A673 (cell line): ENCODE measurements at regions of chr18 and their contacts with region 1.

Region 1: DNA sequence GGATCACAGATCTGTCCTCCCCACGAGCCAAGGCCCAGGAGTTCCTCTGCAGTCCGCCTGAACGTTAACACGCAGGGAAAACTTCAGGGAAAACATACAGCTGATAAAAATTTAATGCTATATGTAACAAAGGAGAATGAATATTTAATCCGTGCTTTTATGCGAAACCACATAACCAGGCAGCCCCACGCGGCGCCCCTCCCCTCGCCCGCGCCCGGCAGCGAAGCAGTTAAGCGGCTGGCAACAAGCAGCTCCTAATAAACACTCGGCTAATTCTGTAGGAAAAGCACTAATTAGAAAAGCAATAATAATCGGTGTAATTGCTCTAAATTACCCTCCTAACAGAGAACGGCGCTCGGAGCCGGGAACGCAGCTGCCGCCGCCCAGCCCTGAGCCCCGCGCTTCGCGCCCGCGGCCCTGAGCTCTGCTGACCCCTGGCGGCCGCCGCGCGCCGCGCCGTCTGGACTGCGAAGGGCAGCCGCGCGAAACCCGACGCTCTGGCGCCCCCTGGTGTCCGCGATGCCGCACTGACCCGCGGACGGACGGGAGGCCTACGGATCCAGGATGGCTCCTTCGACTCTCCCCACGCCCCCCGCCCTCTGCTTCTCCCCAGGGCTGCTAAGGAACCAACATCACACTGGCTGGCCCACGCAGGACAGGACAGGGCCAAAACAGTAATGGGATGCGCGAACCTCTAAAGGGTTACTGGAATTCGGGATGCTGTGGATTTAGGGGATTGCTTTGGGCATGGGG is 181.4 kb downstream of the SMAD2 start:
- DNase-seq: peak; percentile 73
- H3K4me3 ChIP-seq: peak overlapping the region; percentile 29
- H3K27ac ChIP-seq: no peak overlapping the region
- H3K4me1 ChIP-seq: no peaks in the 10 kb centered on the region
- H3K27me3 ChIP-seq: peaks cover 4% of the 10 kb centered on the region
- CTCF ChIP-seq: peak; percentile 93

Region 2: DNA sequence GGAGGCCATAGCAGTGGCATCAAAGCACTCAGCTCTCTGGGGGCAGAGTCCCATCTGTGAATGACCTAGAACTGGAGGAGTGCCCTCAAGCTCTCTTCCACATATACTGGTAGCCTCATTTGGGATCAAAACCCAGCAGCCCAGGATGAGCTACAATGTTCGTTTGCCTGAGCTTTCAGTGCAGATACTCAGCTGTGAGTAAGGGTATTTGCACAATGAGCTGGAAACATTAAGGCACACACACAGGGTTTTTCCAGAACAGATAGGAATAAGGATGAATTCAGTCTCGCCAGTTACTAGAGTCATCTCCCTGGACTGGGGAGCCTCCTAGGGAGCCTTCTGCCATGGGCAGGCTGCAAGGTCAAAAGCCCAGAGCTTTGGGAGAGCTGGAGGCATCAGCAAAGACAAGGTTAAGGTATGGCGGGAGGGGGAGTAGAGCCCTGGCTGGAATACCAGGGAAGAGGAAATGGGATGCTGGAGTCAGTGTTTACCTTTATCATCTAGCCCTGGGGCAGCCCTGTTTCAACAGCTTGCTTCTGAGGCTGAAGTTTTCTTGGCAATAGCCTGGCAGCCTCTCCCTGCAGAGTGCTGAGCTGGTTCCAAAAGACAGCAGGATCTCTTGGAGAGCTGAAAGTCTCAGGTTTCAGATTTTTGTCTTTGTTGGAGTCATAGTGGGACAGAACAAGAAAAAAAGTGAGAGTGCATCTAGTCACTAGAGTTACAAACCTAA is 1279.7 kb before region 1 on chr18:
- CTCF ChIA-PET with region 1: no interaction called
- POLR2A ChIA-PET with region 1: no interaction called
- intact Hi-C with region 1: no loop called
- DNase-seq: peak; percentile 56
- H3K4me3 ChIP-seq: no peak overlapping the region
- H3K27ac ChIP-seq: no peak overlapping the region
- H3K4me1 ChIP-seq: peaks cover 23% of the 10 kb centered on the region
- H3K27me3 ChIP-seq: no peaks in the 10 kb centered on the region
- CTCF ChIP-seq: no peak

Region 3: DNA sequence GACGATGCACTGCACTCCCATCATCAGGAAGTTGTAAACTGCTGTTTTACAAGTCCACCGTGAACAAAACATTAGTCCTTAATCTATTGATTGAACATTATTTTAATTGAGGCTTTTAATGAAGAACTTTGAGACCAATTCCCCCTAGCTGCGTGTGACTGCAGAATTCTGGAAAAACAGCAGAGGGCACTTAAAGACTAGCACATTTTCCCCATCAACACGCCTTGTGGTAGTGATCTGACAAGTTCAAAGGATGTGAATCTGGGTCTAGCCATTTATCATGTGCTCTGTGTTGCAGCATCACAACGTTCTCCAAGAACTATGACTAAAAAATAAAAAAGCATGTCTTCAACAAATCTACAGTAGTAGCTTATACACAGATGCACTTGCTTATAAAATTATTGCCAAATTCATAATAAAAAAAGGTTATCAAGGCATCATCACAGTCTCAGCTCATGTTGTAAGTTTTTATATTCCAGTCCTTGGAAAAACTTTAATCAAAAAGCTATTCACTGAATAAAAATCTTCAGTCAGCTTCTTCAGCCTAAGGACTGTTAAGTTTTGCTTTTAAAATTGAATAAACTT is 533.4 kb before region 1 on chr18:
- CTCF ChIA-PET with region 1: interaction called, 11 read pairs
- POLR2A ChIA-PET with region 1: no interaction called
- intact Hi-C with region 1: loop called (anchors 1 kb)
- DNase-seq: peak; percentile 53
- H3K4me3 ChIP-seq: no peak overlapping the region
- H3K27ac ChIP-seq: no peak overlapping the region
- H3K4me1 ChIP-seq: no peaks in the 10 kb centered on the region
- H3K27me3 ChIP-seq: peaks cover 97% of the 10 kb centered on the region
- CTCF ChIP-seq: peak; percentile 76

Region 4: GRCh38 chr18:47531717-47532116 is 217.3 kb before region 1 on chr18:
- CTCF ChIA-PET with region 1: no interaction called
- POLR2A ChIA-PET with region 1: no interaction called
- intact Hi-C with region 1: no loop called
- DNase-seq: no peak
- H3K4me3 ChIP-seq: no peak overlapping the region
- H3K27ac ChIP-seq: no peak overlapping the region
- H3K4me1 ChIP-seq: no peaks in the 10 kb centered on the region
- H3K27me3 ChIP-seq: peaks cover 79% of the 10 kb centered on the region
- CTCF ChIP-seq: peak; percentile 26; the same call in 1 of the 2 replicates

Region 5: DNA sequence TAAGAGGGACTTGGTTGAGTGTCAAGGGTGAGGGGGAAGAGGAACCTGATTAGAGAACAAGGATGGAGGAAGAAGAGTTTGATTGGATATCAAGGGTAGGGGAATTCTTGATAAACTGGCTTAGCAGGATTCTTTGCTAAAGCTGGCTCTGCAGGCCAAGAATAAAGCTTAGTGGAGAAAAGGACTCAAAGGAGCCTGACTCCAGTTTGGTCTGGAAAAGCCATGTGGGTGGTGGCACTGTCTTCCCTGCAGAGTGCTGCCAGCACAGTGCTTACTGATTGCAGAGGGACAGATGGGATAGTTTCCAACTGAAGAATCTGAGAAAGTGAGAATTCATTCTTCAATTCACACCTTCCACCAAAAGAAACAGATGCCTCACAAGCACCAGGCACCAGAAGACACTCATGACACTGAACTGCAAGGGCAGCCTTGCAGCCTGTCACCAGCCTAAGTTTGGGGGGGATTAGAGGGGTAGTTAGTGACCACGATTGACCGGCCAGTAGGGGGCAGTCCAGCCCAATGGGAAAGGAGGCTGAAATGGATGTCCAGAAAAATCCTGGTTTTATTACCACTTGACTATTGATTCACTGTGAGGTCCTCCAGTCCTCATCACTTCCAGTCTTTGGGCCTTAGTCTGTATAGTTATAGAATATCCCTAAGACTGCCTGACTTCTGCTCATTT is 153.1 kb before region 1 on chr18:
- CTCF ChIA-PET with region 1: no interaction called
- POLR2A ChIA-PET with region 1: no interaction called
- intact Hi-C with region 1: loop called (anchors 2 kb)
- DNase-seq: peak; percentile 31
- H3K4me3 ChIP-seq: no peak overlapping the region
- H3K27ac ChIP-seq: no peak overlapping the region
- H3K4me1 ChIP-seq: no peaks in the 10 kb centered on the region
- H3K27me3 ChIP-seq: peaks cover 77% of the 10 kb centered on the region
- CTCF ChIP-seq: peak; percentile 62

Region 6: DNA sequence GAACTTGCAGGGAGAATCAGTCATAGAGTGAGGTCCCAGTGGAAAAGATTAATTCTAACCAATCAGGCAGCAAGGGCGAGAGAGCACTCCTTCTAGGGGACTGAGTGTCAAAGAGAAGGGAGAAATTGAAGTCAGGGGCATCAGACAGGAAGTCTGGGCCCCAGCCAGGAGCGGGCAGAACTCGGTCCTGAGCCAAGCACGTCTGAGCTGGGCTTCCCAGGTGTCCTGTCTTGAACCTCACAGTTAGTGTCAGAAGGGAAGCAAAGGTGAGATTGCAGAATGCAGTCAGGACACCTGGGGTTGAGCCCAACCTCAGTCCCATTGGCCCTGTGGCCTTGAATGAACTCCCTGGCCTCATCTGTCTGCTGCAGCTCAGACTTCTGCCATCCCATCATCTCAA is 39.5 kb before region 1 on chr18:
- CTCF ChIA-PET with region 1: no interaction called
- POLR2A ChIA-PET with region 1: no interaction called
- intact Hi-C with region 1: no loop called
- DNase-seq: no peak
- H3K4me3 ChIP-seq: no peak overlapping the region
- H3K27ac ChIP-seq: no peak overlapping the region
- H3K4me1 ChIP-seq: no peaks in the 10 kb centered on the region
- H3K27me3 ChIP-seq: peaks cover 10% of the 10 kb centered on the region
- CTCF ChIP-seq: no peak